ENCODE measurements at regions of chr16 and their contacts with region 1.

Region 1: DNA sequence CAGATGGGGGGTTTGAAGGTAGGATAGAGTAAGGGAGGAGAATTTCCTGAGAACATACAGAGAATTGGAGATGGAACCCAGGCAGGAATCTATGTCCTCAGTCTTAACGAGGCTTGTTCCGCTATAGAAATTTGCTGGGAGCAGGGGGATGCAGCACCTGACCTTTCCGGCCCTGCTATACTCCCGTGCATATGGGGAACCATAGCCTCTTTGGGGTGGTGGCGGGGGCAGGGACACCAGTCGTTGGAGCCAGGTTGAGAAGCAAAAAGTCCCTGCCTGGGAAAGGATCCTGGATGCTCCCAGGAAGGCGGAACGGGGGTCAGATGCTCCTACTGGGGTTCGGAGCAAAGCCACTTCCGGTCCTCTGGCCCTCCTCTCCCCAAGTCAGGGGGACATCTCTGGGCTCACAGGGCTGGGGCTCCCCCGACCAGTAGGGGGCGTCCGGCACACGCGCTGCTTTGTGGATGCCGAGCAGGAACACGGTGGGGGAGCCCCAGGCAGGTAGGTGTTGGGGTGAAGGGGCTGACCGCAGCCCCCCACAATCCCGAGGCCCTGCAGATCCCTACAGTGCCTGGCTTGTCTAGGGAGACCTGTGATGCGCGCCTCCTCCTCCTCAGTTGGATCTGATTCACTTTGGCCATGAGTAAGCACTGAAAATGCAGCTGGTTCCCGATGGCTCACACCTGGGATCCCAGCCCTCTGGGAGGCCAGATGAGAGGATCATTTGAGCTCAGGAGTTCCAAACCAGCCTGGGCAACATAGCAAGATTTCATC is 15.5 kb upstream of the TFAP4 start:
- DNase-seq: peak in 1 of 2 experiments; percentile 98
- H3K4me3 ChIP-seq: peak overlapping the region in 2 of 4 experiments; percentile 2 to 16; a peak in 2 of 8 replicates
- H3K27ac ChIP-seq: peak overlapping the region; percentile 38; the same call in 1 of the 2 replicates
- H3K4me1 ChIP-seq: peaks cover 3 to 17% (median 8%) of the 10 kb centered on the region in 4 experiments
- H3K27me3 ChIP-seq: no peaks in the 10 kb centered on the region
- CTCF ChIP-seq: peak; percentile 94 to 98 (median 98)
- EP300 ChIP-seq: no peak
- POLR2A ChIP-seq: no peak
- RAD21 ChIP-seq: peak; percentile 84 to 93

Region 2: DNA sequence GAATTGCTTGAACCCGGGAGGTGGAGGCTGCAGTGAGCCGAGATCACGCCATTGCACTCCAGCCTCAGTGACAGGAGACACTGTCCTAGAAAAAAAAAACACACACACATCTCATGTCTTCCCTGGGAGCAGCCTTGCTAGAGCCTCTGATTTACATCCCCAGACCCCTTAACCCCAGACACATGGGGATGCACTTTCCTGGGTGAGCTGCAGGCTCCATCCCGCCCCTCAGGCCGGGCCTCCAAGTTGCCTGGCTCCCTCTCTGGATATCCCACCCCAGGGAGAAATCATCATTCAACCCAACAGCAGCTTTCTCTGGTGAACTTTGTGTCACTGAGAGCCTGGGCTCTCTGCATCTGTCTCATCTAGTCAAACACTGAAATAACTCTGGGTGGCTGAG is 68.0 kb before region 1 on chr16:
- CTCF ChIA-PET with region 1: no interaction called
- POLR2A ChIA-PET with region 1: no interaction called
- DNase-seq: no peak
- H3K4me3 ChIP-seq: no peak overlapping the region
- H3K27ac ChIP-seq: no peak overlapping the region
- H3K4me1 ChIP-seq: peaks cover 0 to 10% (median 4%) of the 10 kb centered on the region in 4 experiments; a peak in 4 of 7 replicates
- H3K27me3 ChIP-seq: no peaks in the 10 kb centered on the region
- CTCF ChIP-seq: no peak
- EP300 ChIP-seq: no peak
- POLR2A ChIP-seq: no peak
- RAD21 ChIP-seq: no peak

Region 3: DNA sequence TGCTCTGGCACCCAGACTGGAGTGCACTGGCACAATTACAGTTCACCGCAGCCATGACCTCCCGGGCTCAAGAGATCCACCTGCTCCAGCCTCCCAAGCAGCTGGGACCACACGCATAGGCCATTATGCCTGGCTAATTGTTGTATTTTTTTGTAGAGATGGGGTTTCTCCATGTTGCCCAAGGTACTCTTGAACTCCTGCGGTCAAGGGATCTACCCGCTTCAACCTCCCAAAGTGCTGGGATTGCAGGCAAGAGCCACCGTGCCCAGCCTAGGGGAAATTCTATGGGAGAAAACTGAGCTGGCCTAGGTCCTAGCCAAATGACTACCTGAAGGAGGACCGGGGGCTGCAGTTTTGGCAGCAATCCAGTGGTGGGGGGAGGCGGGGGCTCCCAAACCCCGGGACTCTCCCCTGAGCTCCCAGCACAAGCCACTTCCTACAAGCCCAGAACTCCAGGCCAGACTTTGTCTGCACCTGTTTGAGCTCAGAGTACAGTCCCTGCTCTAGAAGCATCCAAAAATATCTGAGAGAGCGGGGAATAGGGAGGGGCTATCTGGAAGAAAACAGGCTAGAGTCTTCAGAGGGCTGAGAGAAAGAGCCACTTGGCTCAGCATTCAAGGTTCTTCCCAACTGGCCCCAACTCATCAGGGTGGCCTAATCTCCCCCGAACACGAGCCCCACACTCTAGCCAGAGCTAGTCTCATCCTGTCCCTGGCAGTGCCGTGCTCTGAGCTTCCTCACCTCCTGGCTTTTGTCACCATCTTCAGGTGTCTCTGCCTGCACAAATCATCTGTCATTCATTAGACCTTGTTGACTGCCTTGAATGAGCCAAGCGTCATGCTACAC is 55.6 kb before region 1 on chr16:
- CTCF ChIA-PET with region 1: no interaction called
- POLR2A ChIA-PET with region 1: no interaction called
- DNase-seq: no peak
- H3K4me3 ChIP-seq: no peak overlapping the region
- H3K27ac ChIP-seq: no peak overlapping the region
- H3K4me1 ChIP-seq: no peaks in the 10 kb centered on the region
- H3K27me3 ChIP-seq: no peaks in the 10 kb centered on the region
- CTCF ChIP-seq: no peak
- EP300 ChIP-seq: no peak
- POLR2A ChIP-seq: no peak
- RAD21 ChIP-seq: no peak

Region 4: DNA sequence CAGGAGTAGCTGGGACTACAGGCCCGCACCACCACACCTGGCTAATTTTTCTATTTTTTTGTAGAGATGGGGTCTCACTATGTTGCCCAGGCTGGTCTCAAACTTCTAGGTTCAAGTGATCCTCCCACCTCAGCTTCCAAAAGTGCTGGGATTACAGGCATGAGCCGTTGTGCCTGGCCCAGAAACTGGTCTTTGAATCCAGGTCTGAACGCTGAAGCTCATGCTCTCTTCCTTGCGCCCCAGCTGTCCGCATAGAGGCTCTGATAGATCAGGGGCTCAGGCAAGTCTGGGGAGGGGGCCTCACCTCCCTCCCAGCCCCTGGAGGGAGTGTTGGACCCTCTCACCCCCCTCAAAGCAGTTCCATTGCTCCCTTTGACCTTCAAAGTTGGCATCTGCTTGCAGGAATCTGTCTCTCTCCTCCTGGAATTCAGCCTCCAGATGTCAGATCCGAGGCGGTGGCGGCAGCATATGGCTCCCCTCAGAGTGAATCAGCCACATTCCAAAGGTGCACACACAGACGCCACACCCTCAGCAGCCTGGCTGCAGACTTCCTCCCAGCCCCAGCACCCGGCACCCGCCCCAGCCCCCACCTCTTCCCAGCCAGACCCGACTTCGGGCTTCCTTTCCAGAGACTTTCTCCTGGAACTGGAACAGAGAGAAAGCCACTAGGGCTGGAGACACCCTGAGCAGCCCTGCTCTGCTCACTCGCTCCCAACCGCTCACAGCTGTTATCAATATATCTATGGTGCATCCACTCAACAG is 10.6 kb after region 1 on chr16:
- CTCF ChIA-PET with region 1: interaction called, 300 read pairs
- POLR2A ChIA-PET with region 1: interaction called, 93 read pairs
- DNase-seq: peak in 1 of 2 experiments; percentile 66
- H3K4me3 ChIP-seq: no peak overlapping the region
- H3K27ac ChIP-seq: no peak overlapping the region; the same call in 1 of the 2 replicates
- H3K4me1 ChIP-seq: peaks cover 4 to 13% (median 5%) of the 10 kb centered on the region in 4 experiments
- H3K27me3 ChIP-seq: no peaks in the 10 kb centered on the region
- CTCF ChIP-seq: no peak
- EP300 ChIP-seq: no peak
- POLR2A ChIP-seq: no peak
- RAD21 ChIP-seq: no peak

Region 5: GRCh38 chr16:4323845-4324478 is 35.6 kb after region 1 on chr16:
- CTCF ChIA-PET with region 1: interaction called, 300 read pairs
- POLR2A ChIA-PET with region 1: interaction called, 12 read pairs
- DNase-seq: peak in 1 of 2 experiments; percentile 77
- H3K4me3 ChIP-seq: peak overlapping the region in 1 of 4 experiments; percentile 11; a peak in 1 of 8 replicates
- H3K27ac ChIP-seq: no peak overlapping the region
- H3K4me1 ChIP-seq: peaks cover 5 to 38% (median 31%) of the 10 kb centered on the region in 4 experiments
- H3K27me3 ChIP-seq: no peaks in the 10 kb centered on the region
- CTCF ChIP-seq: no peak
- EP300 ChIP-seq: no peak
- POLR2A ChIP-seq: no peak
- RAD21 ChIP-seq: no peak

Region 6: GRCh38 chr16:4339909-4340308 is 51.6 kb after region 1 on chr16:
- CTCF ChIA-PET with region 1: interaction called, 132 read pairs
- POLR2A ChIA-PET with region 1: interaction called, 5 read pairs
- DNase-seq: no peak
- H3K4me3 ChIP-seq: no peak overlapping the region
- H3K27ac ChIP-seq: no peak overlapping the region
- H3K4me1 ChIP-seq: no peaks in the 10 kb centered on the region; a peak in 2 of 7 replicates
- H3K27me3 ChIP-seq: no peaks in the 10 kb centered on the region
- CTCF ChIP-seq: no peak
- EP300 ChIP-seq: no peak
- POLR2A ChIP-seq: no peak
- RAD21 ChIP-seq: no peak

Region 7: DNA sequence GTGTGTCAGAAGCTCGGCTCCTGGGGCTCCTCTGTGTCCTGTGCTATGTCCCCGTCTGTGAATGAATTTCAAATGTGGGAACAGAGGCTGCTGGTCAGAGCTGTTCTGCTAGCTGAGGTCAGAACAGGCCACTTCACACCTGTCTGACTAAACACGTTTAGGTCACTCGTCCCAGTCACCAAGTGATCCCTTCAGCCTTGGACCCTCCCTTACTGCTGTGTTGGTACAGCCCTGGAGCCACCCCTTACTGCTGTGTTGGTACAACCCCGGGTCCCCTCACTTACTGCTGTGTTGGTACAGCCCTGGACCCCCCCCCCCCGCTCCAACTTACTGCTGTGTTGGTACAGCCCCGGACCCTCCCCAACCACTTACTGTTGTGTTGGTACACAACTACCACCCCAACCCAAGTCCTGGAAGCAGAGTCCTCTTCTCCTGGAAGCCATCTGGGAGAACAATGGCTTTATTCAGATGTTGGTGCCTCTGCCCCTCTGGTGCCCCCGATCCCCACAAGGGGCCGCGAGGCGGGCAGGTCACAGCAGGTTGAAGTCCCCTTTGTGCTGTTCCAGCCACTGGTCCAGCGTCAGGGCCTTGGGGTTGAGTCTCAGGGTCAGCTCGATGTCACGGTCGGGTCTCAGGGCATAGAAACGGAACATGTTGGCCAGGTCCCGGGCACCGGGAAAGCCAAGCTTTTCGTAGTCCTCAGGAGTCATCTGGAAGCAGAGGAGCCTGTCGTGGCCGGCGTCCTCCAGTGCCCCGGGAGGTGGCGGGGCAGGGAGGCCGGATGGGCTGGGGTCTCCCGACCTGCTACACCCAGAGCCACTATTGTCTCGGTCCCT is 173.1 kb after region 1 on chr16:
- CTCF ChIA-PET with region 1: no interaction called
- POLR2A ChIA-PET with region 1: no interaction called
- DNase-seq: peak in 1 of 2 experiments; percentile 66
- H3K4me3 ChIP-seq: no peak overlapping the region
- H3K27ac ChIP-seq: no peak overlapping the region; the same call in 1 of the 2 replicates
- H3K4me1 ChIP-seq: peaks cover 0 to 9% (median 3%) of the 10 kb centered on the region in 4 experiments; a peak in 4 of 7 replicates
- H3K27me3 ChIP-seq: no peaks in the 10 kb centered on the region
- CTCF ChIP-seq: no peak
- EP300 ChIP-seq: peak in 1 of 2 experiments; percentile 99; a peak in 2 of 3 replicates
- POLR2A ChIP-seq: no peak
- RAD21 ChIP-seq: no peak